CD4-positive, alpha-beta T cell (primary cell): ENCODE measurements at regions of chr3 and their contacts with region 1.

Region 1: GRCh38 chr3:71583566-71584449 is at the start of gene FOXP1:
- DNase-seq: peak; percentile 49 to 92 (median 68)
- ATAC-seq: peak; percentile 54
- H3K4me3 ChIP-seq: peak within 1 kb of the TSS; percentile 81
- H3K4me3 Mint-ChIP-seq: peak within 1 kb of the TSS; percentile 95
- H3K27ac ChIP-seq: peak within 1 kb of the TSS; percentile 78 to 80
- H3K27ac Mint-ChIP-seq: peak within 1 kb of the TSS; percentile 85
- H3K4me1 ChIP-seq: peaks cover 25% of the 10 kb centered on the region
- H3K4me1 Mint-ChIP-seq: peaks cover 48% of the 10 kb centered on the region
- H3K27me3 ChIP-seq: no peaks in the 10 kb centered on the region
- H3K27me3 Mint-ChIP-seq: no peaks in the 10 kb centered on the region
- CTCF ChIP-seq: no peak
- total RNA-seq, gene FOXP1: 493 to 508 TPM

Region 2: DNA sequence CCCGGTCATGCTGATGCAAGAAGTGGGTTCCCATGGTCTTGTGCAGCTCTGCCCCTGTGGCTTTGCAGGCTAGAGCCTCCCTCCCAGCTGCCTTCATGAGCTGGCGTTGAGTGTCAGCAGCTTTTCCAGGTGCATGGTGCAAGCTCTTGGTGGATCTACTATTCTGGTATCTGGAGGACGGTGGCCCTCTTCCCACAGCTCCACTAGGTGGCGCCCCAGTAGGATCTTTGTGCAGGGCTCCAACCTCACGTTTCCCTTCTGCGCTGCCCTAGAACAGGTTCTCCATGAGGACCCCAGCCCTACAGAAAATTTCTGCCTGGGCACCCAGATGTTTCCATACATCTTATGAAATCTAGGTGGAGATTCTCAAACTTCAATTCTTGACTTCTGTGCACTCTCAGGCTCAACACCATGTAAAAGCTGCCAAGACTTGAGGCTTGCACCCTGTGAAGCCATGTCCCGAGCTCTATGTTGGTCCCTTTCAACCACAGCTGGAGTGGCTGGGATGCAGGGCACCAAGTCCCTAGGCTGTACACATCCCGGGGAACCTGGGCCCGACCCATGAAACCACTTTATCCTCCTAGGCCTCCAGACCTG is 1033.0 kb before region 1 on chr3:
- CTCF ChIA-PET with region 1: interaction called, 7 read pairs
- POLR2A ChIA-PET with region 1: no interaction called
- intact Hi-C with region 1: loop called (anchors 1 kb)
- DNase-seq: peak; percentile 59 to 83 (median 65)
- ATAC-seq: peak; percentile 84
- H3K4me3 ChIP-seq: no peak overlapping the region
- H3K4me3 Mint-ChIP-seq: no peak overlapping the region
- H3K27ac ChIP-seq: no peak overlapping the region
- H3K27ac Mint-ChIP-seq: no peak overlapping the region
- H3K4me1 ChIP-seq: no peaks in the 10 kb centered on the region
- H3K4me1 Mint-ChIP-seq: no peaks in the 10 kb centered on the region
- H3K27me3 ChIP-seq: no peaks in the 10 kb centered on the region
- H3K27me3 Mint-ChIP-seq: peaks cover 12% of the 10 kb centered on the region
- CTCF ChIP-seq: peak; percentile 75

Region 3: GRCh38 chr3:71064288-71064955 is 519.4 kb before region 1 on chr3:
- CTCF ChIA-PET with region 1: no interaction called
- POLR2A ChIA-PET with region 1: interaction called, 10 read pairs
- intact Hi-C with region 1: loop called (anchors 5 kb)
- DNase-seq: peak; percentile 45 to 86 (median 64)
- ATAC-seq: peak; percentile 41
- H3K4me3 ChIP-seq: peak overlapping the region; percentile 71
- H3K4me3 Mint-ChIP-seq: no peak overlapping the region
- H3K27ac ChIP-seq: peak overlapping the region; percentile 72 to 97
- H3K27ac Mint-ChIP-seq: no peak overlapping the region
- H3K4me1 ChIP-seq: peaks cover 29% of the 10 kb centered on the region
- H3K4me1 Mint-ChIP-seq: peaks cover 62% of the 10 kb centered on the region
- H3K27me3 ChIP-seq: no peaks in the 10 kb centered on the region
- H3K27me3 Mint-ChIP-seq: no peaks in the 10 kb centered on the region
- CTCF ChIP-seq: no peak

Region 4: GRCh38 chr3:71305231-71306206 is 278.3 kb before region 1 on chr3:
- CTCF ChIA-PET with region 1: interaction called, 3 read pairs
- POLR2A ChIA-PET with region 1: interaction called, 4 read pairs
- intact Hi-C with region 1: loop called (anchors 2 to 5 kb)
- DNase-seq: peak in 9 of 14 experiments; percentile 12 to 50 (median 19)
- ATAC-seq: peak; percentile 44
- H3K4me3 ChIP-seq: peak overlapping the region; percentile 60
- H3K4me3 Mint-ChIP-seq: peak overlapping the region; percentile 87
- H3K27ac ChIP-seq: peak overlapping the region; percentile 6 to 69
- H3K27ac Mint-ChIP-seq: peak overlapping the region; percentile 93
- H3K4me1 ChIP-seq: peaks cover 24% of the 10 kb centered on the region
- H3K4me1 Mint-ChIP-seq: peaks cover 96% of the 10 kb centered on the region
- H3K27me3 ChIP-seq: no peaks in the 10 kb centered on the region
- H3K27me3 Mint-ChIP-seq: no peaks in the 10 kb centered on the region
- CTCF ChIP-seq: no peak

Region 5: GRCh38 chr3:71456156-71456555 is 127.7 kb before region 1 on chr3:
- CTCF ChIA-PET with region 1: interaction called, 4 read pairs
- POLR2A ChIA-PET with region 1: interaction called, 10 read pairs
- intact Hi-C with region 1: no loop called
- DNase-seq: peak in 4 of 14 experiments; percentile 49 to 64 (median 63)
- ATAC-seq: peak; percentile 37
- H3K4me3 ChIP-seq: peak overlapping the region; percentile 25
- H3K4me3 Mint-ChIP-seq: peak overlapping the region; percentile 78
- H3K27ac ChIP-seq: peak overlapping the region; percentile 72 to 78
- H3K27ac Mint-ChIP-seq: peak overlapping the region; percentile 94
- H3K4me1 ChIP-seq: peaks cover 54% of the 10 kb centered on the region
- H3K4me1 Mint-ChIP-seq: peaks cover 95% of the 10 kb centered on the region
- H3K27me3 ChIP-seq: no peaks in the 10 kb centered on the region
- H3K27me3 Mint-ChIP-seq: no peaks in the 10 kb centered on the region
- CTCF ChIP-seq: peak; percentile 46

Region 6: DNA sequence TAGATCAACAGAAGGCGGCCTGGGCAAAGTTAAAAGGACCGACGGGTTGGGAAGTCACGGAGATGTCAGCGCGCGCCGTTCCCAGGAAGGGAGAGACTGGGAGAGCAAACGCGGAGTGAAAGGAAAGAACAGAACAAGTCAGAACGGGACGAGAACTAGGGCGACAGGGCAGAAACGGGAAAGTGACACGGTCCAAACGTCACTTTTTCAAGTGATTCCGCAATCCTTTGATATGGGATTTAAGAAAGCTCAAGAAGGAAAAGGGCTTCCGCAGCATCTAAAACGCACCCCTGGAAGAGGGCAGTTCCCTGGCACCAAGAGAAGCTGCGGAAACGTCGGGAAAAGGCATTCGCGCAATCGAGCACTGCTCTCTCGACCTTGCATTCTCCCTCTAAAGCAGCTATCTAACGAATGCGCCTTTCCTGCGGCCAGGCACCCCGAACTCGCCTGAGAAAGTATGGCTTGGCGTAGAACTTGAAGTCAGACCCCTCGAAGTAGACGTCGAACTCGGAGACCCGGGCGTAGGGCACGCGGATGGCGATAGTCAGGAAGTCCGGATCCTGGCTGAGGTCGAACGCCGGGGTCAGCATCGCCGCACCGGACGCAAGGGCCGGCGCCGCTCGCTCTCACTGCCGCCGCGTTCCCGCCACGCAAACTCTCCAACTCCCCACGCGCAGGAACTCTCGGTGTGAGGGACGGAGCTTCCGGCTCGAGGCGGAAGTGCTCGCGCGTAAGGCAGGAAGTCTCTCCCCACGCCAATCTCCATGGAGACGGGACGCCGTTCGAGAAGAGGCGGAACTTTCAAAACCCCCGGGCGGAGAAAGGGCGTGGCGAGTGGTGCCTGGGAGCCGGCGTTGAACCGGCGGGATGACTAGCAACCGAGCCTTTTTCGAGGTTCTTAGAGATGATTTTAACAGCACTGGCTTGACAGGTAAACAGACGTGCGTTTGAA is 1264.2 kb after region 1 on chr3 and contains the start of gene SHQ1:
- CTCF ChIA-PET with region 1: no interaction called
- POLR2A ChIA-PET with region 1: no interaction called
- intact Hi-C with region 1: loop called in 1 of 2 experiments (anchors 10 kb)
- DNase-seq: peak; percentile 86 to 98 (median 92)
- ATAC-seq: peak; percentile 93
- H3K4me3 ChIP-seq: peak within 1 kb of the TSS; percentile 93
- H3K4me3 Mint-ChIP-seq: peak within 1 kb of the TSS; percentile 97
- H3K27ac ChIP-seq: peak within 1 kb of the TSS in 1 of 2 donors; percentile 55
- H3K27ac Mint-ChIP-seq: peak within 1 kb of the TSS; percentile 88
- H3K4me1 ChIP-seq: peaks cover 24% of the 10 kb centered on the region
- H3K4me1 Mint-ChIP-seq: peaks cover 64% of the 10 kb centered on the region
- H3K27me3 ChIP-seq: no peaks in the 10 kb centered on the region
- H3K27me3 Mint-ChIP-seq: no peaks in the 10 kb centered on the region
- CTCF ChIP-seq: no peak
- total RNA-seq, gene SHQ1: 9.4 to 13.1 TPM